Breast epithelium (tissue), 4 donors: ENCODE measurements at regions of chr15 and their contacts with region 1.

Region 1: GRCh38 chr15:31799715-31800321 is 230.5 kb upstream of the CHRNA7 start:
- DNase-seq: no peak
- H3K4me3 ChIP-seq: no peak overlapping the region
- H3K27ac ChIP-seq: no peak overlapping the region
- H3K4me1 ChIP-seq: no peaks in the 10 kb centered on the region
- H3K27me3 ChIP-seq: no peaks in the 10 kb centered on the region
- CTCF ChIP-seq: no peak
- POLR2A ChIP-seq: no peak

Region 2: GRCh38 chr15:31567861-31568260 is 232.0 kb before region 1 on chr15:
- intact Hi-C with region 1: loop called (anchors 5 kb)
- DNase-seq: no peak
- H3K4me3 ChIP-seq: no peak overlapping the region
- H3K27ac ChIP-seq: no peak overlapping the region
- H3K4me1 ChIP-seq: no peaks in the 10 kb centered on the region
- H3K27me3 ChIP-seq: no peaks in the 10 kb centered on the region
- CTCF ChIP-seq: no peak
- POLR2A ChIP-seq: no peak

Region 3: GRCh38 chr15:31824024-31824423 is 24.2 kb after region 1 on chr15:
- intact Hi-C with region 1: no loop called
- DNase-seq: no peak
- H3K4me3 ChIP-seq: no peak overlapping the region
- H3K27ac ChIP-seq: no peak overlapping the region
- H3K4me1 ChIP-seq: no peaks in the 10 kb centered on the region
- H3K27me3 ChIP-seq: no peaks in the 10 kb centered on the region
- CTCF ChIP-seq: no peak
- POLR2A ChIP-seq: no peak